Vagina (tissue), 2 donors: ENCODE measurements at regions of chr5 and their contacts with region 1.

Region 1: DNA sequence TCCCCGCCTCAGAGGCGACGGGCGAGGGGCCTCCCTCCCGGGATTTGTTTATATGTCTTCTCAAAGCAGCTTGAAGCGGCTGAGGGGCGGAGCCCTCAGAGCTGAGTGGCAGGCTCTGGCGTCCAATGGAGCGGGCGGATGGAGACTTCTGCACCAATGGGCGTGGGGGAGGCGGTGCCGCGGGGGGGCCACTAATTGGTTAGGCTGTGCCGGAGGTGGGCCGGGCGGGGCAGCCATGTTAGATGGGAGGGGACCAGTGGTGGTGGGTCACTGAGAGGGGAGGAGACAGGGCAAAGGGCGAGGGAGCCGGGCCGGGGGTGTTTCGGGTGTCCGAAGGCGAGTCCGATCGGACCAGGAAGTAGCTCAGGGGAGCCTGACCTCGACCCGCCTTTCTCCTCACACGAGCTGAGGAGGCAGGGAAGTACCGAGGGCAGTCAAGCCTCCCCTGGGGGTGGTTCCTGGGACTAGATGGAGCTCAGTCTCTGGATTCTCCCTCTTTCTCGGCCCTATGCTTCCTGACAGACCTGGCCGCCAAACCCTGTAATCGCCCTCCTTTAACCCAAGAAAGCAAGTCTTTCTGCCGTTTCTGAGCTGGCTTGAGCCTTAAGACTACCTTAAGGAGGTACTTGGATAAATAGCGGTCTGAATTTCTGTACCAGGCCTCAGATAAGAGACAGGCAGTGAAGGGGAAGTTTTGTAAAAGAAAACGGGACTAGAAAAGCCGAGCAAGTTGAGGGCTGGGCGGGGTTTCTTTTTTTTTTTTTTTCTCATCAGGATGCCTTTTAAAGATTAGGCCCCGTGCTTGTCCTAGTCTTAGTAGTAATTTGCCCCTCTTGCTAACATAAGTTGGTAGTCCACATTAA is 1.1 kb downstream of the CREBRF start:
- DNase-seq: peak; percentile 99 to 100
- H3K4me3 ChIP-seq: peak overlapping the region; percentile 100
- H3K27ac ChIP-seq: peak overlapping the region; percentile 100
- H3K4me1 ChIP-seq: peaks cover 29% of the 10 kb centered on the region
- H3K27me3 ChIP-seq: no peaks in the 10 kb centered on the region
- CTCF ChIP-seq: no peak
- POLR2A ChIP-seq: no peak

Region 2: GRCh38 chr5:172194985-172195774 is 862.1 kb before region 1 on chr5:
- intact Hi-C with region 1: no loop called
- DNase-seq: no peak
- H3K4me3 ChIP-seq: no peak overlapping the region
- H3K27ac ChIP-seq: no peak overlapping the region
- H3K4me1 ChIP-seq: no peaks in the 10 kb centered on the region
- H3K27me3 ChIP-seq: no peaks in the 10 kb centered on the region
- CTCF ChIP-seq: no peak
- POLR2A ChIP-seq: no peak

Region 3: GRCh38 chr5:172293054-172293744 is 764.1 kb before region 1 on chr5:
- intact Hi-C with region 1: loop called (anchors 2 kb)
- DNase-seq: no peak
- H3K4me3 ChIP-seq: no peak overlapping the region
- H3K27ac ChIP-seq: no peak overlapping the region
- H3K4me1 ChIP-seq: no peaks in the 10 kb centered on the region
- H3K27me3 ChIP-seq: no peaks in the 10 kb centered on the region
- CTCF ChIP-seq: peak; percentile 53 to 69 (median 67)
- POLR2A ChIP-seq: no peak

Region 4: GRCh38 chr5:172984243-172984953 is 72.9 kb before region 1 on chr5:
- intact Hi-C with region 1: loop called (anchors 1 kb)
- DNase-seq: peak in 1 of 2 donors; percentile 90
- H3K4me3 ChIP-seq: peak overlapping the region; percentile 87 to 96
- H3K27ac ChIP-seq: peak overlapping the region; percentile 98
- H3K4me1 ChIP-seq: peaks cover 52% of the 10 kb centered on the region
- H3K27me3 ChIP-seq: no peaks in the 10 kb centered on the region
- CTCF ChIP-seq: peak in 1 of 3 experiments; percentile 28
- POLR2A ChIP-seq: no peak

Region 5: DNA sequence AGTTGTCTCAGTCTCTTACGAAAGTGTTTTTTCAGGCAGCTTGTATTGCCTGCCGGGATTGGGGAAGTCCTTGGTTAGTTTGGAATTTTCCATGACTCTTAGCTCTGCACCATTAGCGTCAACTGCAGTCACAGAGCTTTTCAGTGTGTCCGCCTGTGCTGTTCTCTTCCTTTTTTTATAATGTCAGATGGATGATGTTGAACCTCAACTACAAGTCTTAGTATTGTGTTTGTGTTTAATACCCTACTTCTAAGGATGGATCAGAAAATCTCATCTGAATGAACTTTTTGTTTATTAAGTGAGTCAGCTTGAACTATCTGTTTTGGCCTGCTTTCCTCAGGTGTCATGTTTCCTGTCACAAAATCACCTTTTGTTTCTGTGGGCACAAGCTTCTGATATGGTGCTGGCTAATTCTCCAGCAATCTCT is 40.7 kb before region 1 on chr5:
- intact Hi-C with region 1: loop called (anchors 5 kb)
- DNase-seq: peak in 1 of 2 donors; percentile 85
- H3K4me3 ChIP-seq: no peak overlapping the region
- H3K27ac ChIP-seq: peak overlapping the region; percentile 72
- H3K4me1 ChIP-seq: peaks cover 30% of the 10 kb centered on the region
- H3K27me3 ChIP-seq: no peaks in the 10 kb centered on the region
- CTCF ChIP-seq: no peak
- POLR2A ChIP-seq: no peak

Region 6: GRCh38 chr5:173513521-173513991 is 456.3 kb after region 1 on chr5:
- intact Hi-C with region 1: no loop called
- DNase-seq: no peak
- H3K4me3 ChIP-seq: no peak overlapping the region
- H3K27ac ChIP-seq: no peak overlapping the region
- H3K4me1 ChIP-seq: no peaks in the 10 kb centered on the region
- H3K27me3 ChIP-seq: no peaks in the 10 kb centered on the region
- CTCF ChIP-seq: no peak
- POLR2A ChIP-seq: no peak